Heart right ventricle (tissue), 16 donors: ENCODE measurements at regions of chr11 and their contacts with region 1.

Region 1: GRCh38 chr11:6612213-6613041 is at the start of gene TAF10:
- DNase-seq: peak; percentile 98
- ATAC-seq: peak; percentile 94 to 97 (median 96)
- H3K4me3 ChIP-seq: peak within 1 kb of the TSS; percentile 57 to 82 (median 74)
- H3K27ac ChIP-seq: peak within 1 kb of the TSS; percentile 89 to 100 (median 98)
- H3K4me1 ChIP-seq: peaks cover 10 to 64% (median 40%) of the 10 kb centered on the region in 9 donors
- H3K27me3 ChIP-seq: no peaks in the 10 kb centered on the region
- CTCF ChIP-seq: peak in 7 of 9 donors; percentile 23 to 52 (median 40)
- total RNA-seq, gene TAF10: 78.0 to 101 (median 89.7) TPM

Region 2: GRCh38 chr11:6654281-6655019 is 42.0 kb after region 1 on chr11:
- intact Hi-C with region 1: loop called in 1 of 10 experiments (anchors 5 kb)
- DNase-seq: peak; percentile 47 to 59
- ATAC-seq: peak; percentile 40 to 69 (median 54)
- H3K4me3 ChIP-seq: peak overlapping the region in 9 of 10 donors; percentile 40 to 61 (median 57)
- H3K27ac ChIP-seq: peak overlapping the region; percentile 33 to 91 (median 81)
- H3K4me1 ChIP-seq: peaks cover 8 to 67% (median 21%) of the 10 kb centered on the region in 9 donors
- H3K27me3 ChIP-seq: peaks cover 0 to 24% (median 0%) of the 10 kb centered on the region in 7 donors
- CTCF ChIP-seq: no peak

Region 3: GRCh38 chr11:6667733-6668374 is 55.4 kb after region 1 on chr11:
- intact Hi-C with region 1: loop called in 2 of 10 experiments (anchors 5 to 10 kb)
- DNase-seq: peak in 1 of 2 donors; percentile 24
- ATAC-seq: peak in 5 of 8 donors; percentile 33 to 52 (median 41)
- H3K4me3 ChIP-seq: no peak overlapping the region
- H3K27ac ChIP-seq: no peak overlapping the region
- H3K4me1 ChIP-seq: peaks cover 0 to 22% (median 5%) of the 10 kb centered on the region in 9 donors
- H3K27me3 ChIP-seq: no peaks in the 10 kb centered on the region
- CTCF ChIP-seq: peak; percentile 16 to 65 (median 57)

Region 4: DNA sequence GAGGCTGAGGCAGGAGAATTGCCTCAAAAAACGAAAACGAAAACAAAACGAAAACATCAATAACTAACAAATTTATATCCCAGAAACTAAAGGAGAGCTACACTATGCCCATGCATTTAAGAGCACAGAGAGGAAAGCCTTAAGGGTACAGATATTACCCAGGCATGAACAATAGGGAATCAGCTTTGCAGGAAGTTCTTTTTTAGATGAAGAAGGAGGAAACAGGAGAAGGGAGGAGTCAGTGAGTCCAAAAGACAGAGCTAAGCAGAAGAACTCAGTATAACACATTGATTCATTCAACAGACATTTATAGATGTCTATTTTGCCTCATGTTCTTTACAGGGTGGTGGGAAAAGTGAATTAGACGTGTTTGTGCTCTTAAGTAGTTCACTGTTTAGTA is 62.4 kb after region 1 on chr11:
- intact Hi-C with region 1: loop called in 2 of 10 experiments (anchors 5 to 10 kb)
- DNase-seq: no peak
- ATAC-seq: peak in 7 of 8 donors; percentile 54 to 76 (median 66)
- H3K4me3 ChIP-seq: no peak overlapping the region
- H3K27ac ChIP-seq: peak overlapping the region in 9 of 10 donors; percentile 36 to 82 (median 60)
- H3K4me1 ChIP-seq: peaks cover 0 to 27% (median 10%) of the 10 kb centered on the region in 9 donors
- H3K27me3 ChIP-seq: no peaks in the 10 kb centered on the region
- CTCF ChIP-seq: no peak